ENCODE measurements at regions of chr1 and their contacts with region 1.

Region 1: DNA sequence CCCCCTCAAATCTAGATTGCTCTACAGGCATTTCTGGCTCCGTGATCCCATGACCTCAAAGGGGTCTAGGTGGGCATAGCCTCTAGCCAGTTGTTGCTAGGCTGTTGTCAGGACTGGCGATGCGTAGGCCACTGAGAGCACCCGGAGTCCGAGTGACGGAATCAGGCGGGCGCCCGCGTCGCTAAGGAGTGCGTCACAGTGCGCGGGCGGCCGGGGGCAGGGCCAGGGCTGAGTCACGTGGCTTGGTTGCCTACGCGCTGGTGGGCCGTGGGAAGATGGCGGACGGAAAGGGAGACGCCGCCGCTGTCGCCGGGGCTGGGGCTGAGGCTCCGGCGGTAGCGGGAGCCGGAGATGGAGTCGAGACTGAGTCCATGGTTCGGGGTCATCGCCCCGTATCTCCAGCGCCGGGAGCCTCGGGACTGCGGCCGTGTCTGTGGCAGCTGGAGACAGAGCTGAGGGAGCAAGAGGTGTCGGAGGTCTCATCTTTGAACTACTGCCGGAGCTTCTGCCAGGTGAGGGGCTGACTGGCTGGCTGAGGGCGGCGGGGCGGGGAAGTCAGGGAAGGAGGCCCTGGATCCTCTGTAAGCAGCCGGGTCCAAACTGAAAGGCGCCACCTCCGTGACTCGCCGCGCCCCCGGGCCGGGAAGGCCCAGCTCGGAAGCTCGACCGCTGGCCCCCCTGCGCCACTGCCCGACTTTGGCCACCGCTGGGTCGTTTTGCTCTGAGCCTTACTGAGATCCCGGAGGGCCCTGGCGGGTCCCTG is at the start of gene RLF:
- DNase-seq: peak; percentile 95 to 96 (median 96)
- ATAC-seq: peak; percentile 100
- H3K4me3 ChIP-seq: peak within 1 kb of the TSS; percentile 100
- H3K4me1 ChIP-seq: peaks cover 18% of the 10 kb centered on the region
- CTCF ChIP-seq: no peak
- total RNA-seq, gene RLF: 11.0 to 21.8 (median 12.2) TPM

Region 2: GRCh38 chr1:40257688-40258444 is 96.6 kb after region 1 on chr1 and contains the start of gene ZMPSTE24:
- intact Hi-C with region 1: loop called in 1 of 2 experiments (anchors 10 kb)
- DNase-seq: peak; percentile 95 to 97 (median 95)
- ATAC-seq: peak; percentile 99
- H3K4me3 ChIP-seq: peak within 1 kb of the TSS; percentile 73
- H3K4me1 ChIP-seq: peaks cover 8% of the 10 kb centered on the region
- CTCF ChIP-seq: no peak
- total RNA-seq, gene ZMPSTE24: 46.0 to 51.9 (median 47.0) TPM

Region 3: GRCh38 chr1:40291293-40291692 is 130.0 kb after region 1 on chr1:
- intact Hi-C with region 1: no loop called
- DNase-seq: no peak
- ATAC-seq: no peak
- H3K4me3 ChIP-seq: no peak overlapping the region
- H3K4me1 ChIP-seq: no peaks in the 10 kb centered on the region
- CTCF ChIP-seq: no peak

Region 4: DNA sequence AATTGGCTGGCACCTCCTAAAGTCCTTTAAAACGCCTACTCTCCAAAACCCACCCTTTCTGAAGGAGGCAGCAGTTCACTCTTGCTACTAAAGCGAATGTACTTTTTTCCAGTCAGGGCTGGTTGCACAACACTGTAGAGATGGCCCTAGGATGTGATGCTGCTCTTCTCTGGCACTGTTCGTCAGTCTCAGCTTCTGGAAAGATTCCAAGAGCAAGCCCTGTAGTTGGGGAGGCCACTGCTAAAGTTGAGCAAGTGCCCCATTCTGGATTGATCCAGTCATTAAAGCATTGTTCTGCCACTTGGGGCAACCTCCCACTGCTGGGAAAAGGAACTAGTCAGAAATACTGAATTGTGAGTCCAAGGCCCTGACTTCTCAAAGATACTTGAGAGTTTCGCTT is 593.8 kb after region 1 on chr1:
- intact Hi-C with region 1: no loop called
- DNase-seq: no peak
- ATAC-seq: no peak
- H3K4me3 ChIP-seq: no peak overlapping the region
- H3K4me1 ChIP-seq: peaks cover 3% of the 10 kb centered on the region
- CTCF ChIP-seq: no peak

Measured in mucosa of descending colon (tissue), 3 donors.